CD4-positive, alpha-beta T cell (primary cell): ENCODE measurements at regions of chr11 and their contacts with region 1.

Region 1: GRCh38 chr11:9534791-9535781 is 38.4 kb upstream of the WEE1 start:
- DNase-seq: peak; percentile 63 to 89 (median 72)
- ATAC-seq: peak; percentile 64
- H3K4me3 ChIP-seq: no peak overlapping the region
- H3K4me3 Mint-ChIP-seq: no peak overlapping the region
- H3K27ac ChIP-seq: no peak overlapping the region
- H3K27ac Mint-ChIP-seq: no peak overlapping the region
- H3K4me1 ChIP-seq: no peaks in the 10 kb centered on the region
- H3K4me1 Mint-ChIP-seq: no peaks in the 10 kb centered on the region
- H3K27me3 ChIP-seq: no peaks in the 10 kb centered on the region
- H3K27me3 Mint-ChIP-seq: no peaks in the 10 kb centered on the region
- CTCF ChIP-seq: peak; percentile 86

Region 2: DNA sequence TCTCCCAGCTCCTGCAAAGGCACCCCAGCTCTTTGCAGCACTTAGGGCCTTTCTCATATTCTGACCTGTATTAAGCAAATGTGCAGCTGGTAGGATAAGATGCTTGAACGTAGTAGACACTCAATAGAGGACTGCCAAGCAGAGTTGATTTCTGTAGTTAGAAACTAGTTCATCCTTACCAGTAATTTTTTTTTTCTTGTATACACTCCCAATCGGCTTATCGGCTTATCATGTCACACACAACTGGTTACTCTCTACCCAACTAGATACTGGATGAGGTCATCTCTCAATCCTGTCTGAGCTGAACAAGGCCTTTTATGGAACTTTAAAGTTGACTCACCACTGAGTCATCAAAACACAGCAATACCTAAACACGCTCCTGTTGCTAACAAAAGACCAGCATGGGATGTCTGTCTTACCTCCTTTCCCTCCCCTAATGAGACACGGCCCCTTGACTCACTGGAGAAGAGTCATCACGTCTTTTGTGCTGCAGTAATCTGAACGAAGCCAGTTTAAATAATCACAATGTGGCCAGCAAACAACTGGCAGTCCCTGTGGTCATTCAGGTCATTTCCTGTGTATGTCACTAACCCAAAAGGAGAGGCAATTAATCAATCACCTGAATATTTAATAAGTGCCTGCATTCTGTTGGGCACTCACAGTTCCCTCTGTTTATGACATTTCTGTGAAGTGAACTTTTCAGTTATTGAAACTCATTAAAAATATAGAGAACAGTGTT is 30.9 kb after region 1 on chr11:
- CTCF ChIA-PET with region 1: interaction called, 11 read pairs
- POLR2A ChIA-PET with region 1: no interaction called
- intact Hi-C with region 1: loop called in 1 of 2 experiments (anchors 5 kb)
- DNase-seq: peak in 9 of 14 experiments; percentile 15 to 82 (median 27)
- ATAC-seq: peak; percentile 80
- H3K4me3 ChIP-seq: no peak overlapping the region
- H3K4me3 Mint-ChIP-seq: no peak overlapping the region
- H3K27ac ChIP-seq: no peak overlapping the region
- H3K27ac Mint-ChIP-seq: peak overlapping the region; percentile 62
- H3K4me1 ChIP-seq: peaks cover 9% of the 10 kb centered on the region
- H3K4me1 Mint-ChIP-seq: peaks cover 25% of the 10 kb centered on the region
- H3K27me3 ChIP-seq: no peaks in the 10 kb centered on the region
- H3K27me3 Mint-ChIP-seq: no peaks in the 10 kb centered on the region
- CTCF ChIP-seq: no peak

Region 3: GRCh38 chr11:9573052-9573774 is 38.1 kb after region 1 on chr11 and contains the start of gene WEE1:
- CTCF ChIA-PET with region 1: interaction called, 15 read pairs
- POLR2A ChIA-PET with region 1: interaction called, 7 read pairs
- intact Hi-C with region 1: loop called in 1 of 2 experiments (anchors 5 kb)
- DNase-seq: peak; percentile 85 to 98 (median 94)
- ATAC-seq: peak; percentile 89
- H3K4me3 ChIP-seq: peak within 1 kb of the TSS; percentile 96
- H3K4me3 Mint-ChIP-seq: peak within 1 kb of the TSS; percentile 90
- H3K27ac ChIP-seq: peak within 1 kb of the TSS in 1 of 2 donors; percentile 69
- H3K27ac Mint-ChIP-seq: peak within 1 kb of the TSS; percentile 64
- H3K4me1 ChIP-seq: peaks cover 32% of the 10 kb centered on the region
- H3K4me1 Mint-ChIP-seq: peaks cover 46% of the 10 kb centered on the region
- H3K27me3 ChIP-seq: no peaks in the 10 kb centered on the region
- H3K27me3 Mint-ChIP-seq: peaks cover 15% of the 10 kb centered on the region
- CTCF ChIP-seq: no peak
- total RNA-seq, gene WEE1: 9.3 to 10.7 TPM

Region 4: GRCh38 chr11:9613118-9613829 is 78.2 kb after region 1 on chr11:
- CTCF ChIA-PET with region 1: interaction called, 92 read pairs
- POLR2A ChIA-PET with region 1: interaction called, 19 read pairs
- intact Hi-C with region 1: loop called (anchors 1 to 2 kb)
- DNase-seq: peak; percentile 74 to 90 (median 82)
- ATAC-seq: peak; percentile 46
- H3K4me3 ChIP-seq: peak overlapping the region; percentile 66
- H3K4me3 Mint-ChIP-seq: peak overlapping the region; percentile 95
- H3K27ac ChIP-seq: peak overlapping the region; percentile 71 to 86
- H3K27ac Mint-ChIP-seq: peak overlapping the region; percentile 89
- H3K4me1 ChIP-seq: peaks cover 19% of the 10 kb centered on the region
- H3K4me1 Mint-ChIP-seq: peaks cover 16% of the 10 kb centered on the region
- H3K27me3 ChIP-seq: no peaks in the 10 kb centered on the region
- H3K27me3 Mint-ChIP-seq: no peaks in the 10 kb centered on the region
- CTCF ChIP-seq: peak; percentile 84

Region 5: GRCh38 chr11:9748361-9748970 is 213.4 kb after region 1 on chr11:
- CTCF ChIA-PET with region 1: interaction called, 9 read pairs
- POLR2A ChIA-PET with region 1: interaction called, 4 read pairs
- intact Hi-C with region 1: loop called in 1 of 2 experiments (anchors 1 kb)
- DNase-seq: peak in 12 of 14 experiments; percentile 20 to 80 (median 46)
- ATAC-seq: peak; percentile 99
- H3K4me3 ChIP-seq: no peak overlapping the region
- H3K4me3 Mint-ChIP-seq: no peak overlapping the region
- H3K27ac ChIP-seq: no peak overlapping the region
- H3K27ac Mint-ChIP-seq: no peak overlapping the region
- H3K4me1 ChIP-seq: peaks cover 3% of the 10 kb centered on the region
- H3K4me1 Mint-ChIP-seq: no peaks in the 10 kb centered on the region
- H3K27me3 ChIP-seq: no peaks in the 10 kb centered on the region
- H3K27me3 Mint-ChIP-seq: no peaks in the 10 kb centered on the region
- CTCF ChIP-seq: peak; percentile 53

Region 6: GRCh38 chr11:9972989-9973388 is 437.9 kb after region 1 on chr11:
- CTCF ChIA-PET with region 1: no interaction called
- POLR2A ChIA-PET with region 1: no interaction called
- intact Hi-C with region 1: loop called in 1 of 2 experiments (anchors 10 kb)
- DNase-seq: peak in 6 of 14 experiments; percentile 2 to 51 (median 30)
- ATAC-seq: no peak
- H3K4me3 ChIP-seq: no peak overlapping the region
- H3K4me3 Mint-ChIP-seq: no peak overlapping the region
- H3K27ac ChIP-seq: no peak overlapping the region
- H3K27ac Mint-ChIP-seq: no peak overlapping the region
- H3K4me1 ChIP-seq: no peaks in the 10 kb centered on the region
- H3K4me1 Mint-ChIP-seq: no peaks in the 10 kb centered on the region
- H3K27me3 ChIP-seq: no peaks in the 10 kb centered on the region
- H3K27me3 Mint-ChIP-seq: no peaks in the 10 kb centered on the region
- CTCF ChIP-seq: peak; percentile 46

Region 7: DNA sequence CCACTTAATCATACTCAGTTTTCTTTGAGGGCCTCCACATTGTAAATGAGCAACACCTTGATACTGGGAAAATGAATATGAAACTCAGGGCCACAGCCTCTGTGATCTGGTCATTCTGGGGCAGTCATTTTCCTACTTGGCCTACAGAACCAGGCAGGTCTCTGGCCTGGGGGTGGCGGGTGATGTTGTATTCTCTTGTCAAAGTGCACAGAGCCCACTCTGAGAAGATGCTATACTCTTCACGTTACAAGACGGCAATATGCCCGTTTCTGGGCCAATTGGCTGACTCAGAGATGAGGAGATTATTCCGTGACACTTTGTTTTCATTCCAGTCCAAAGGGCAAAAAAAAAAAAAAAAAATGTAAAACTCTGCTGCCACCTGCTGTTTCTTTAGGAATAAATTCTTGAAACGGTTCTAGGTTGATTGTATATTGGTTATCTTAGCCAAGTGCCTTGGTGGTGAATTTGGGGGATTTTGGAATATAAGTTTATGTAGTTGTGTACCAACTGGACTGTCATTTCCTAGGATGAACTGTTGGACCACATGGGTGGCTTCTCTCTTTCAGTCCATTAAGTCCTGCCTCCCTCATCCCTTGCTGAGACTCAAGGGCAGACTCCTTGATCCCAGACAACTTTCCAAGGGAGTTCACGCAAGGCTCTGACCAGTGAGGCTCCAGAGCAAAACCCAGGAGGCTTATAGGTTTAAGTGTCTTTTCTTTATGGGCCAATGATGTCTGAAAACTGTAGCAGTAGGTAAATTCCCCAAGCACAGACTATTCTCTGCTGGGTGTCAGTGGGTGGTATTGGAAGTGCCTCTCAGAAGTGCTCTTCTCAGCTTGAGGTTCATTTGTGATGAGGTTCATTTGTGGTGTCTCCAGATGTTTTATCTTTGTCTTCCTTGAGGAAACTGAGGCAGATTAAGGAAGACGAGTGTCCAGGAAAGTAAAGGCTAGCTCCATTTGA is 788.0 kb after region 1 on chr11:
- CTCF ChIA-PET with region 1: interaction called, 3 read pairs
- POLR2A ChIA-PET with region 1: no interaction called
- intact Hi-C with region 1: loop called (anchors 2 kb)
- DNase-seq: peak in 6 of 14 experiments; percentile 23 to 78 (median 47)
- ATAC-seq: peak; percentile 91
- H3K4me3 ChIP-seq: no peak overlapping the region
- H3K4me3 Mint-ChIP-seq: no peak overlapping the region
- H3K27ac ChIP-seq: no peak overlapping the region
- H3K27ac Mint-ChIP-seq: no peak overlapping the region
- H3K4me1 ChIP-seq: peaks cover 3% of the 10 kb centered on the region
- H3K4me1 Mint-ChIP-seq: no peaks in the 10 kb centered on the region
- H3K27me3 ChIP-seq: no peaks in the 10 kb centered on the region
- H3K27me3 Mint-ChIP-seq: peaks cover 4% of the 10 kb centered on the region
- CTCF ChIP-seq: peak; percentile 80